ENCODE measurements at regions of chr16 and their contacts with region 1.

Region 1: DNA sequence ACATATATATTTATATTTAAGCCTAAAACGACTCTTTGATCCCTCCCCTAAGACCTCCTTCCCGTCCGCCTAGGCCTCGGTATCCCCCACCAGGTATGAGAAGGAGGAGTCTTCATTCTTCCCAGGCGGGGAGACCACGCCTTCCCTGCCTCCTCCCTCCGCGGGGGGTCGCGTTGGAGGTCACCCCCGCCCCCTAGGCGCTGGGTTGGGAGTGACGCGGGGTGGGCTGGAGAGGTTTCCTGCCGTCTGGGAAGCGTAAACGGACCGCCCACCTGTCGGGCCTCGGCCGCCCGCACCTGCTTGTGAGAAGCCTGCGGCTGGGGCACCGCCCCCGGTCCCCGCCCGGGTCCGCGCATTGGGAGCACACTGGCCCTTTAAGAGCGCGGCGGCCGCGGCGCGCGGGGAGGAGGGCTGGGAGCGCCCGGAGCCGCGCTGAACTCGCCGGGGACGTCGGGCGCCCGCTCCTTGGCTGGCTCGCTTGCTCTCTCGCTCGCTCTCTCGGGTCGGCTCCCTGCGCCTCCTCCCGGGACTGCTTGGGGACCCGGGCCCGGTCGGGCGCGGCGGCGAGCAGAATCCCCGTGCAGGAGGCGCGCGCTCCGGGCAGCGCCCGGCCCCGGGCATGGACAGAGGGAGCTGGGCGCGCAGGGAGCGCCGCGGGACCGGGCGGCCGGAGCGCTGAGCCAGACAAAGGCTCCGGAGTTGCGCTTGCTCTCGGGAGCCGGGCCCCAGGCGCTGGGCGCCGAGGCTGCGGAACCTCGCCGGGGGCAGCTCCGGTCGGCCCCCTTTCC is at the start of gene MMP15:
- DNase-seq: no peak
- ATAC-seq: peak; percentile 80
- H3K4me3 ChIP-seq: peak within 1 kb of the TSS; percentile 67
- H3K27ac ChIP-seq: no peak within 1 kb of the TSS
- H3K4me1 ChIP-seq: no peaks in the 10 kb centered on the region; the same call in 1 of the 2 replicates
- H3K27me3 ChIP-seq: peaks cover 11 to 13% of the 10 kb centered on the region in 2 experiments
- CTCF ChIP-seq: no peak
- EP300 ChIP-seq: no peak
- POLR2A ChIP-seq: no peak
- RAD21 ChIP-seq: no peak
- polyA plus RNA-seq, gene MMP15: not detected

Region 2: GRCh38 chr16:58098207-58099096 is 72.9 kb after region 1 on chr16:
- CTCF ChIA-PET with region 1: interaction called, 13 read pairs
- POLR2A ChIA-PET with region 1: no interaction called
- RAD21 ChIA-PET with region 1: interaction called, 3 read pairs
- SMC1A ChIA-PET with region 1: interaction called, 6 read pairs
- in situ Hi-C with region 1: no loop called
- intact Hi-C with region 1: no loop called
- DNase-seq: no peak
- ATAC-seq: no peak
- H3K4me3 ChIP-seq: no peak overlapping the region
- H3K27ac ChIP-seq: no peak overlapping the region
- H3K4me1 ChIP-seq: no peaks in the 10 kb centered on the region
- H3K27me3 ChIP-seq: no peaks in the 10 kb centered on the region
- CTCF ChIP-seq: no peak
- EP300 ChIP-seq: no peak
- POLR2A ChIP-seq: no peak
- RAD21 ChIP-seq: no peak

Region 3: DNA sequence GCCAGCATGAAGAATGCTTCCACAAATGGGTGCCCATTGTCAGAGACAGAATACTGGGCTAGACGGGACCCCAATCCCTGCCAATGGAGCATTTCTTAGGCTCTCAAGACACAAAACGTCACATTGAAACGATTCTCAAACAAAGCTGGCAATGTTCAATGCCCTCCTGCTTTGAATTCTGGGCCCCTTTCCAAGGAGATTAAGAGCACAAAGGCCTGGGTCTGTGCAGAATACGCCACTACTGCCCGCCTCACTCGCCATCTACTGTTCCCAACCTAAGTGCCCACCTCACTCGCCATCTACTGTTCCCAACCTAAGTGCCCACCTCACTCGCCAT is 93.9 kb after region 1 on chr16:
- CTCF ChIA-PET with region 1: interaction called, 16 read pairs
- POLR2A ChIA-PET with region 1: interaction called, 5 read pairs
- RAD21 ChIA-PET with region 1: interaction called, 27 read pairs
- SMC1A ChIA-PET with region 1: interaction called, 17 read pairs
- in situ Hi-C with region 1: no loop called
- intact Hi-C with region 1: loop called (anchors 2 kb)
- DNase-seq: no peak
- ATAC-seq: no peak
- H3K4me3 ChIP-seq: no peak overlapping the region
- H3K27ac ChIP-seq: no peak overlapping the region
- H3K4me1 ChIP-seq: peaks cover 12% of the 10 kb centered on the region
- H3K27me3 ChIP-seq: no peaks in the 10 kb centered on the region
- CTCF ChIP-seq: no peak
- EP300 ChIP-seq: no peak
- POLR2A ChIP-seq: no peak
- RAD21 ChIP-seq: no peak

Region 4: DNA sequence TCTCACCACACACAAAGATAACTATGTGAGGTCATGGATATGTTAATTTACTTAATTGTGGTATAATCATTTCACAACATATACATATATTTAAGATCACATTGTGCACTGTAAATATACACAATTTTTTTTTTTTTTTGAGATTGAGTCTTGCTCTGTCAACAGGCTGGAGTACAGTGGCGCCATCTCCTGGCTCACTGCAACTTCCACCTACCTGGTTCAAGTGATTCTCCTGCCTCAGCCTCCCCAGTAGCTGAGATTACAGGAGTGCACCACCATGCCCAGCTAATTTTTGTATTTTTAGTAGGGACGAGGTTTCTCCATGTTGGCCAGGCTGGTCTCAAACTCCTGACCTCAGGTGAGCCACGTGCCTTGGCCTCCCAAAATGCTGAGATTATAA is 280.8 kb after region 1 on chr16:
- CTCF ChIA-PET with region 1: interaction called, 4 read pairs
- POLR2A ChIA-PET with region 1: no interaction called
- RAD21 ChIA-PET with region 1: no interaction called
- SMC1A ChIA-PET with region 1: no interaction called
- in situ Hi-C with region 1: no loop called
- intact Hi-C with region 1: loop called (anchors 2 kb)
- DNase-seq: no peak
- ATAC-seq: peak; percentile 71
- H3K4me3 ChIP-seq: no peak overlapping the region
- H3K27ac ChIP-seq: no peak overlapping the region
- H3K4me1 ChIP-seq: no peaks in the 10 kb centered on the region
- H3K27me3 ChIP-seq: no peaks in the 10 kb centered on the region
- CTCF ChIP-seq: peak; percentile 46 to 67 (median 54)
- EP300 ChIP-seq: no peak
- POLR2A ChIP-seq: no peak
- RAD21 ChIP-seq: peak; percentile 59

Region 5: DNA sequence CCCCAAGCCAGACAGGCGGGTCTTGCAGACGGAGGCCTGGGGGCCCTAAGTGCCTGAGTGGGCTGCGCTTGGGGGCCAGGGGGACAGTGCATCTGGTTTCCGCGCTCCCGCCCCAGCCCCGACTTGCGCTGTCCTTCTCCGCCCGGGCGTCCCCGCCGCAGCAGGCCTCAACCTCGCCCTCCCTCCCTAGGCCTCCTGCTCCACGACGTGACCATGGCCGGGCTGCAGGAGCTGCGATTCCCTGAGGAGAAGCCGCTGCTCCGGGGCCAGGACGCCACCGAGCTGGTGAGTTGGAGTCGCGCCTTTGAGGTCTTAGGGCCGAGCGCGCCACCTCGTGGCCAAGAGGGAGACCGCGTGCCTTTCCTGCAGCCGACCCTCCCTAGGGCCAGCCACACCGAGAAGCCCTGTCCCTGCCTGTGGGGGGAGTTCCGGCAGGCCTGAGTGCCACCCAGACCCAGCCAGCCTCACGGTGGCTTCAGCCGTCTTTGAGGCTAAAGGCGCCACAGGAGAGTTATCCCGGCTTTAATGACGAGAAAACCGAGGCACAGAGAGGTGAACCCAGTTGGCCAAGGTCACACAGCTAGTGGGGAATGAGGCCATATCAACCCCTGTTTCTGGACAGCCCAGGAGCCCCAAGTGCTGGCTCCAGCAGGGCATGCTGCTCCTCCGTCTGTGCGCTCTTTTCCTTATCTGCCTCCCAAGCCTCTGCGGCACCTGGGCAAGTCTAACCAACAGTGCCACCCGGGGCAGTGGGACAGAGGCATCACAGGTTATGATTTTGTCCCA is 462.2 kb after region 1 on chr16:
- CTCF ChIA-PET with region 1: interaction called, 3 read pairs
- POLR2A ChIA-PET with region 1: no interaction called
- RAD21 ChIA-PET with region 1: no interaction called
- SMC1A ChIA-PET with region 1: no interaction called
- in situ Hi-C with region 1: no loop called
- intact Hi-C with region 1: loop called (anchors 5 kb)
- DNase-seq: no peak
- ATAC-seq: peak; percentile 97
- H3K4me3 ChIP-seq: no peak overlapping the region
- H3K27ac ChIP-seq: no peak overlapping the region
- H3K4me1 ChIP-seq: no peaks in the 10 kb centered on the region
- H3K27me3 ChIP-seq: no peaks in the 10 kb centered on the region; a peak in 1 of 4 replicates
- CTCF ChIP-seq: peak; percentile 85 to 92 (median 90)
- EP300 ChIP-seq: no peak
- POLR2A ChIP-seq: no peak
- RAD21 ChIP-seq: peak; percentile 77

Measured in GM12878 (cell line).